Naive thymus-derived CD4-positive, alpha-beta T cell (primary cell): ENCODE measurements at regions of chr1 and their contacts with region 1.

Region 1: GRCh38 chr1:11645670-11646265 is 8.5 kb downstream of the FBXO2 start:
- DNase-seq: peak; percentile 60 to 81 (median 74)
- ATAC-seq: peak; percentile 68
- H3K4me3 ChIP-seq: no peak overlapping the region
- H3K4me3 Mint-ChIP-seq: no peak overlapping the region
- H3K27ac ChIP-seq: no peak overlapping the region
- H3K27ac Mint-ChIP-seq: no peak overlapping the region
- H3K4me1 ChIP-seq: peaks cover 2 to 15% of the 10 kb centered on the region in 2 donors
- H3K4me1 Mint-ChIP-seq: peaks cover 2 to 20% (median 12%) of the 10 kb centered on the region in 7 donors
- H3K27me3 ChIP-seq: no peaks in the 10 kb centered on the region
- H3K27me3 Mint-ChIP-seq: peaks cover 0 to 14% (median 0%) of the 10 kb centered on the region in 5 donors

Region 2: GRCh38 chr1:11037740-11038182 is 608.0 kb before region 1 on chr1:
- CTCF ChIA-PET with region 1: interaction called, 35 read pairs
- POLR2A ChIA-PET with region 1: no interaction called
- intact Hi-C with region 1: loop called (anchors 1 kb)
- DNase-seq: peak; percentile 76 to 90 (median 85)
- ATAC-seq: peak; percentile 99
- H3K4me3 ChIP-seq: no peak overlapping the region
- H3K4me3 Mint-ChIP-seq: no peak overlapping the region
- H3K27ac ChIP-seq: no peak overlapping the region
- H3K27ac Mint-ChIP-seq: no peak overlapping the region
- H3K4me1 ChIP-seq: no peaks in the 10 kb centered on the region
- H3K4me1 Mint-ChIP-seq: peaks cover 0 to 9% (median 6%) of the 10 kb centered on the region in 7 donors
- H3K27me3 ChIP-seq: peaks cover 0 to 4% of the 10 kb centered on the region in 2 donors
- H3K27me3 Mint-ChIP-seq: no peaks in the 10 kb centered on the region

Region 3: GRCh38 chr1:11238311-11238710 is 407.5 kb before region 1 on chr1:
- CTCF ChIA-PET with region 1: interaction called, 67 read pairs
- POLR2A ChIA-PET with region 1: no interaction called
- intact Hi-C with region 1: loop called (anchors 1 kb)
- DNase-seq: no peak
- ATAC-seq: no peak
- H3K4me3 ChIP-seq: no peak overlapping the region
- H3K4me3 Mint-ChIP-seq: no peak overlapping the region
- H3K27ac ChIP-seq: no peak overlapping the region
- H3K27ac Mint-ChIP-seq: no peak overlapping the region
- H3K4me1 ChIP-seq: no peaks in the 10 kb centered on the region
- H3K4me1 Mint-ChIP-seq: peaks cover 5 to 12% (median 10%) of the 10 kb centered on the region in 7 donors
- H3K27me3 ChIP-seq: no peaks in the 10 kb centered on the region
- H3K27me3 Mint-ChIP-seq: no peaks in the 10 kb centered on the region

Region 4: GRCh38 chr1:11337580-11338073 is 308.1 kb before region 1 on chr1:
- CTCF ChIA-PET with region 1: interaction called, 4 read pairs
- POLR2A ChIA-PET with region 1: no interaction called
- intact Hi-C with region 1: loop called (anchors 1 kb)
- DNase-seq: peak; percentile 46 to 80 (median 68)
- ATAC-seq: peak; percentile 63
- H3K4me3 ChIP-seq: no peak overlapping the region
- H3K4me3 Mint-ChIP-seq: peak overlapping the region in 3 of 10 donors; percentile 9 to 39 (median 36)
- H3K27ac ChIP-seq: no peak overlapping the region
- H3K27ac Mint-ChIP-seq: no peak overlapping the region
- H3K4me1 ChIP-seq: peaks cover 0 to 5% of the 10 kb centered on the region in 2 donors
- H3K4me1 Mint-ChIP-seq: peaks cover 3 to 27% (median 20%) of the 10 kb centered on the region in 7 donors
- H3K27me3 ChIP-seq: no peaks in the 10 kb centered on the region
- H3K27me3 Mint-ChIP-seq: peaks cover 0 to 38% (median 10%) of the 10 kb centered on the region in 5 donors

Region 5: GRCh38 chr1:11634365-11635192 is 11.2 kb before region 1 on chr1:
- CTCF ChIA-PET with region 1: interaction called, 10 read pairs
- POLR2A ChIA-PET with region 1: no interaction called
- intact Hi-C with region 1: no loop called
- DNase-seq: no peak
- ATAC-seq: no peak
- H3K4me3 ChIP-seq: no peak overlapping the region
- H3K4me3 Mint-ChIP-seq: no peak overlapping the region
- H3K27ac ChIP-seq: no peak overlapping the region
- H3K27ac Mint-ChIP-seq: no peak overlapping the region
- H3K4me1 ChIP-seq: no peaks in the 10 kb centered on the region
- H3K4me1 Mint-ChIP-seq: peaks cover 0 to 2% (median 0%) of the 10 kb centered on the region in 7 donors
- H3K27me3 ChIP-seq: no peaks in the 10 kb centered on the region
- H3K27me3 Mint-ChIP-seq: peaks cover 9 to 17% (median 13%) of the 10 kb centered on the region in 5 donors

Region 6: GRCh38 chr1:11675325-11675724 is 29.6 kb after region 1 on chr1:
- CTCF ChIA-PET with region 1: no interaction called
- POLR2A ChIA-PET with region 1: no interaction called
- intact Hi-C with region 1: no loop called
- DNase-seq: no peak
- ATAC-seq: no peak
- H3K4me3 ChIP-seq: no peak overlapping the region
- H3K4me3 Mint-ChIP-seq: no peak overlapping the region
- H3K27ac ChIP-seq: no peak overlapping the region
- H3K27ac Mint-ChIP-seq: peak overlapping the region in 1 of 9 donors; percentile 38
- H3K4me1 ChIP-seq: peaks cover 0 to 3% of the 10 kb centered on the region in 2 donors
- H3K4me1 Mint-ChIP-seq: peaks cover 6 to 19% (median 17%) of the 10 kb centered on the region in 7 donors
- H3K27me3 ChIP-seq: no peaks in the 10 kb centered on the region
- H3K27me3 Mint-ChIP-seq: no peaks in the 10 kb centered on the region

Region 7: DNA sequence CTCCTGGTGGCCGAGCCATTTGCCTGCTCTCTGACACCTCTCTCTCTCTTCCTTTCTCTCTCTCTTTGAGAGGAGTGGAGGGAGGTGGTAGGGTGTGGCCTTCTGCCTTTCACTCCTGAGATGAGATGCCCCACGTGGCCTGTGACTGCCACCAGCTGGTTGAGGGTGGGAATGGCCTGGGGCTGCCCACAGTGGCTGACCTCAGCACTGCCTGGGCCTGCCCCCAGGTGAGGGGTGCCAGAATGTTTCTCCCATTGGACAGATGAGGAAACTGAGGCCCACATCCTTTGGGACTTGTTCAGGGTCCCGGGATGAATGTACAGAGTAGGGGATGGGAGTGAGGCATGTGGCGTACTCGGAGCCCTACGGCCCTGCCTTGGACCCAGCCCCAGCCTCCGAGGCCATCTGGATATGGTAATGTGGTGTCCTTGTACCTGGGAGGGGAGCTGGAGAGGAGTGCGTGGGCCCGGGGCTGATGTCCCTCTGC is 103.5 kb after region 1 on chr1:
- CTCF ChIA-PET with region 1: interaction called, 5 read pairs
- POLR2A ChIA-PET with region 1: no interaction called
- intact Hi-C with region 1: loop called in 1 of 2 experiments (anchors 1 kb)
- DNase-seq: peak in 6 of 9 donors; percentile 43 to 67 (median 57)
- ATAC-seq: peak; percentile 76
- H3K4me3 ChIP-seq: no peak overlapping the region
- H3K4me3 Mint-ChIP-seq: peak overlapping the region in 3 of 10 donors; percentile 26 to 58 (median 41)
- H3K27ac ChIP-seq: peak overlapping the region; percentile 14
- H3K27ac Mint-ChIP-seq: peak overlapping the region in 7 of 9 donors; percentile 35 to 78 (median 59)
- H3K4me1 ChIP-seq: peaks cover 0 to 6% of the 10 kb centered on the region in 2 donors
- H3K4me1 Mint-ChIP-seq: peaks cover 13 to 39% (median 20%) of the 10 kb centered on the region in 7 donors
- H3K27me3 ChIP-seq: no peaks in the 10 kb centered on the region
- H3K27me3 Mint-ChIP-seq: no peaks in the 10 kb centered on the region

Region 8: DNA sequence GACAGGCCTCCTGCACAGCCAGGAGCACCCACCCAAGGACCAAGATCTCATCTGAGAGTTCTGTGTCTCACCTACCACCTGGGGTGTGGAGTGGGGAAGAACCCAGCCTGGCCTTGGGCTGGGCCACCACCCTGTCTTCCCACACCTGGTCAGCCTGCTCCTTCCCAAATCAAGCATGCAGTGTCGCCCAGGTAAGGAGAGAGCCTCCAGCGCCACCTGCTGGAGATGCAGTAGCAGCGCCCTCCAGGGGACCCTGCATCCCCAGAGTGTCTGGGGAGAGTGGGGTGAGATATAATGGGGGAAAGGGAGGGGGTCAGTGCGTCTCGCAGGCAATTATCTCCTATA is 248.1 kb after region 1 on chr1:
- CTCF ChIA-PET with region 1: no interaction called
- POLR2A ChIA-PET with region 1: no interaction called
- intact Hi-C with region 1: loop called in 1 of 2 experiments (anchors 5 kb)
- DNase-seq: peak; percentile 41 to 77 (median 61)
- ATAC-seq: peak; percentile 91
- H3K4me3 ChIP-seq: no peak overlapping the region
- H3K4me3 Mint-ChIP-seq: peak overlapping the region in 1 of 10 donors; percentile 2
- H3K27ac ChIP-seq: no peak overlapping the region
- H3K27ac Mint-ChIP-seq: peak overlapping the region in 2 of 9 donors; percentile 25 to 54
- H3K4me1 ChIP-seq: no peaks in the 10 kb centered on the region
- H3K4me1 Mint-ChIP-seq: peaks cover 0 to 4% (median 0%) of the 10 kb centered on the region in 7 donors
- H3K27me3 ChIP-seq: peaks cover 0 to 4% of the 10 kb centered on the region in 2 donors
- H3K27me3 Mint-ChIP-seq: peaks cover 20 to 49% (median 31%) of the 10 kb centered on the region in 5 donors